BJ (cell line): ENCODE measurements at regions of chr22 and their contacts with region 1.

Region 1: GRCh38 chr22:50525390-50526068 is at the start of gene SCO2:
- DNase-seq: peak; percentile 69
- H3K4me3 ChIP-seq: peak within 1 kb of the TSS; percentile 75
- H3K27me3 ChIP-seq: no peaks in the 10 kb centered on the region
- CTCF ChIP-seq: peak; percentile 42
- polyA plus RNA-seq, gene SCO2: 0.78 and 2.5 TPM in 2 replicates

Region 2: DNA sequence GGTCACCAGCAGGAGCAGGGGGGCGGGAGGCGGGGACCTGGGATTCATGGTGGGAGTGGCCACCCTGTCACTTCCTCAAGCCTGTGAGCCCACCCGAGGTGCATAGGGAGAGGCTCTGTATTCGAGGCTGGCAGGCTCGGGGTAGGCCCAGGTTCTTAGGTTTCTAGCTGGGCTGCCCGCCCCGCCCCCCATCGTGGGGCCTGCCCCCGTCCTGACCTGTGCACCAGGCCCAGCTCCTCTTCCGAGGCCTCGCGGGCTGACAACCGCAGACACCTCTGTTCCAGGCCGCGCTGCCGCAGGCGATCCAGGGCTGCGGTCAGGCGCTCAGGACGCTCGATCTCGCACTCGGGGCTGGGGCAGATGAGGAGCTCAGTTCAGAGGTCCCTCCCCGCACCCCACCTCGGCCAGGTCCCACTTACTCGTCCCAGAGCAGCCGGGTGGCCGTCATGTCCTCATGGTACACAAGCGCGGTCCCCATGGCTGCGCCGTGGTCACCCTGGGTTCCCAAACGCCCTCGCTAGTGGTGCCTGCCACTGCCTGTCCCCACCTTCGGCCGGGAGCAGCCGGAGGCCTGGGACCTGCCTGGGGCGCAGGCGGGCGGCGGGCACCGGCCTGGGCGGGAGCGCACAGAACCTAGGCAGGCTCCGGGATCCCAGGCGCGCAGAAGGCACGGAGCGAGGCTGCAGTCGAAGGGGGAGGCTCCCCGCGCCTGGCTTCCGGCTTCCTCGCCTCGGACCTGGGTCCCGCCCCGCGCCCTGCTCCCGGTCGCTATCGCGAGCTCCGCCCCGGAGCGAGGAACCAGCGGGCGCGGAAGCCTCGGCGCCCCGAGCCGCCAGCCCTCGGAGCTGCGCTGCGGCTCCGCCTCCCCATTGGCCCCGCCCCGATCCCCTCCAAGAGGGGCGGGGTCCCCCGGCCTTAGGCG is 274.7 kb before region 1 on chr22 and contains the start of gene HDAC10:
- CTCF ChIA-PET with region 1: interaction called, 10 read pairs
- POLR2A ChIA-PET with region 1: no interaction called
- DNase-seq: no peak
- H3K4me3 ChIP-seq: peak within 1 kb of the TSS; percentile 65
- H3K27me3 ChIP-seq: no peaks in the 10 kb centered on the region
- CTCF ChIP-seq: no peak
- polyA plus RNA-seq, gene HDAC10: 8.8 and 18.2 TPM in 2 replicates

Region 3: DNA sequence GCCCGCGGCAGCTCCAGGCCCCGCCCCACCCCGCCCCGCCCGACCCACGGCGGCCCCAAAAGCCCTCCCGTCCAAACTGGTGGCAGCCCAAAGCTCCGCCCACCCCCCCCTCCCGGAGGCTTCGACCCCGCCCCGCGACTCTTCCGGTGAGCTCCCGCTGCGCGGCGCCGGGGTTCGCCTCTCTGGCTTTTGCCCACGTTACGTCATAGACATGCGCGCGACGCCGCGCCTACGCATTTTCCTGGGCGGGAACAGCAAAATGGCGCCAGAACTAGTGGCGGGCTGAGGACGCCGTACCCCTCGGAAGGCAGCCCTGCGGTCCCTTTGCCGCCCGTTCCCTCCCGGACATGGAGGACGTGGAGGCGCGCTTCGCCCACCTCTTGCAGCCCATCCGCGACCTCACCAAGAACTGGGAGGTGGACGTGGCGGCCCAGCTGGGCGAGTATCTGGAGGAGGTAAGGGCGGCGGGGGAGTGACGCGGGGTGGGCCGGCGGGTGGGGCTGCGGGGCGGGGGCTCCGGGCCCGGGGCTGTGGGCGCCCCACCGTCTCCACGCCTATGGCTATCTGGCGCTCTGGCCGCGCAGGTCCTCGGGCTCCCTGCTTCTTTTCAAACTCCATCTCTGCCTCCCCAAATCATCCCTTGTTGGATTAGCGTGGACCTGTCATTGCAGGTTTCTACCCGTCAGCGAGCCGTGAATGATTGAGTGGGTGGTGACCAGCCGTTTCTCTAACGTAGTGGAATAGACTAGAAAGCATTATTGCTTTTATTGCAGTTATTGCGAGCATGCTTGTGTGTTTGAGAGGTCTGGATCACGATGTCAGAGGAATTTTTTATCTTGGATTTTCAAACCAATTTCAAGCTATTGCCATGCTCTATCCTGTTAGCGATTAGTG is 17.3 kb before region 1 on chr22 and contains the start of gene NCAPH2:
- CTCF ChIA-PET with region 1: interaction called, 10 read pairs
- POLR2A ChIA-PET with region 1: interaction called, 9 read pairs
- DNase-seq: peak; percentile 55
- H3K4me3 ChIP-seq: peak within 1 kb of the TSS; percentile 99
- H3K27me3 ChIP-seq: no peaks in the 10 kb centered on the region
- CTCF ChIP-seq: 0 out of 2 replicates have a peak, but pooled peaks have one; percentile 6
- polyA plus RNA-seq, gene NCAPH2: 16.1 and 31.7 TPM in 2 replicates

Region 4: GRCh38 chr22:50540381-50540780 is 14.9 kb after region 1 on chr22:
- CTCF ChIA-PET with region 1: interaction called, 13 read pairs
- POLR2A ChIA-PET with region 1: interaction called, 4 read pairs
- DNase-seq: no peak
- H3K4me3 ChIP-seq: no peak overlapping the region
- H3K27me3 ChIP-seq: peaks cover 4% of the 10 kb centered on the region
- CTCF ChIP-seq: no peak

Region 5: GRCh38 chr22:50562523-50563412 is 37.2 kb after region 1 on chr22 and contains the start of gene SYCE3:
- CTCF ChIA-PET with region 1: interaction called, 13 read pairs
- POLR2A ChIA-PET with region 1: no interaction called
- DNase-seq: peak; percentile 30
- H3K4me3 ChIP-seq: peak within 1 kb of the TSS; percentile 52
- H3K27me3 ChIP-seq: peaks cover 7% of the 10 kb centered on the region; the same call in 1 of the 2 replicates
- CTCF ChIP-seq: peak; percentile 84
- polyA plus RNA-seq, gene SYCE3: not detected in 2 replicates

Region 6: GRCh38 chr22:50620593-50621355 is 95.2 kb after region 1 on chr22:
- CTCF ChIA-PET with region 1: interaction called, 14 read pairs
- POLR2A ChIA-PET with region 1: no interaction called
- DNase-seq: no peak
- H3K4me3 ChIP-seq: no peak overlapping the region
- H3K27me3 ChIP-seq: peaks cover 5% of the 10 kb centered on the region
- CTCF ChIP-seq: no peak; the same call in 1 of the 2 replicates

Region 7: DNA sequence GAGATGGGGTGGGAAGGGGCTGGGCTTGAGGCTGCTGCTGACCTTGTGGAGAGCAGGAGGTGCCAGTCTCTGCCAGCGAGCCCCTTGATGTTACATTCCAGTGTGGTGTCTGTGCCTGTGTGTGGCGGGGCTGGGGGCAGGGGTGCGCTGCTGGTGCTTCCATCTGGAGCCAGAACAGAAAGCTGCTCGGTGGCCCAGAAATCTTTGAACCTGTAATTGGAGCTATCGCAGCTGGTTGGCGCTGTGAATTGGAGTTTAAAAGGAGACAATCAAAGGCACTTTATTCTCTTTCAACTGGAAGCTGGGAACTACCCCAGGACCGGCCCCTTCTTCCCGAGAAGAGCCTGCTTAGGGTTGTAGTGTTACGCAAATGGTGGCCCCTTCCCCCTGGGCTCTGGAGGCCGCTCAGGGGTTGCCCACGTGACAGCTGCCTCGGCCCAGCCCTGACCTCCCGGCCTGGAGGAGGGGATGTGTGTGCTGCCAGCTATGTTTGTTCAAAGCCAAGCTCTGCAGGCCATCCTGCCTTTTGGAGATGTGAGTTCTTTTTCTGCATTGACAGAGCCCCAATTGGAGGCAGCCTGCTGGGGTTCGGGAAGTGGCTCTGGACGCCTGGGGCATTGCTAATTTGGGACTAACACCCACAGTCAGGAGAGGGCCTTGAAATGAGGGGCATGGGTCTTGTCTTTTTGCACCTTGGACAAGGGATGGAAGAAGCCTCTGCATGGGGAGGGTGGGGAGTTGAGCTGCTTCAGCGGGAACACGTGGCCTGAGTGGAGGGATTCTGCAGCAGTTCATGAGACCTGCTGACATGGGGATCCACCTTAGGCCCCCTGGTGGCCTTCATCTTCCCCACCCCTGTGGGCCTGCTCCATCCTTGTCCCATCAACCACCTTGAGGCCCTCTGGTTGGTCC is 116.4 kb after region 1 on chr22:
- CTCF ChIA-PET with region 1: no interaction called
- POLR2A ChIA-PET with region 1: interaction called, 14 read pairs
- DNase-seq: no peak
- H3K4me3 ChIP-seq: no peak overlapping the region
- H3K27me3 ChIP-seq: peaks cover 28% of the 10 kb centered on the region
- CTCF ChIP-seq: peak; percentile 43

Region 8: DNA sequence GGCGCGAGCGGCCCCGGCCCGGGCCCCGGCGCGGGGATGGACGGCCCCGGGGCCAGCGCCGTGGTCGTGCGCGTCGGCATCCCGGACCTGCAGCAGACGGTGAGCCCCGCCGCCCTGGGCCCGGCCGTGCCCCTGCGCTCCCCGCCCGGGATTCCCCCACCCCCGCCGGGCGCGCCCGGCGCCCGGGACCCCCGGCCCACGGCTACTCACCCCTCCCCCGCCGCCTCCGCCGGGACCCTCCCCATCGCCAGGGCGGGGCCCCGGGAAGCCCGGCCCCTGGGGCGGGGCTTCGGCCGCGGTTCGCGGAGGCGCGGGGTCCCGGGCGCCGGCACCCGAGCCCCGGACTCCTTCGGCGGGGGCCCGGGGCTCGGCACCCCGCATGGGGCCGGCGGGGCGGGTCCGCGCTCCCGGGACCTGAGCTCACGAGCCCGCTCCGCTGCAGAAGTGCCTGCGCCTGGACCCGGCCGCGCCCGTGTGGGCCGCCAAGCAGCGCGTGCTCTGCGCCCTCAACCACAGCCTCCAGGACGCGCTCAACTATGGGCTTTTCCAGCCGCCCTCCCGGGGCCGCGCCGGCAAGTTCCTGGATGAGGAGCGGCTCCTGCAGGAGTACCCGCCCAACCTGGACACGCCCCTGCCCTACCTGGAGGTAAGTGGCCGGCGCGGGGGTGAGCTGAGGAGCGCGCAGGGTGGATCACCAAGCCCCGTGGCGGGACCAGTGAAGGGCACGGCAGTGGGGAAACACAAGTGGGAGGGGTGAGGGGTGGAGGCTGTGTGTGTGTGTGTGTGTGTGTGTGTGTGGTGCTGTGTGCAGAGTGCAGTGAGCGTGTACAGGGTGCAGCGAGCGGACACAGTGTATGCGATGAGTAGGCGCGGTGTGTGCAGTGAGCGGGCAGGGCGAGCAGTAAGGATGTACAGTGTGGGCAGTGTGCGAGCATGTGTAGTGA is 149.3 kb after region 1 on chr22:
- CTCF ChIA-PET with region 1: no interaction called
- POLR2A ChIA-PET with region 1: no interaction called
- DNase-seq: no peak
- H3K4me3 ChIP-seq: no peak overlapping the region
- H3K27me3 ChIP-seq: peaks cover 25% of the 10 kb centered on the region
- CTCF ChIP-seq: no peak